Activated CD8-positive, alpha-beta T cell treated with anti-CD3 and anti-CD28 coated beads, Interleukin-2, amount 10 ng/mL, durations not matched to agents 7 days and 5 days (primary cell): ENCODE measurements at regions of chr1 and their contacts with region 1.

Region 1: GRCh38 chr1:66242646-66243547 is 291.1 kb upstream of the SGIP1 start:
- DNase-seq: peak; percentile 83
- ATAC-seq: peak; percentile 95
- H3K4me3 Mint-ChIP-seq: no peak overlapping the region
- H3K27ac Mint-ChIP-seq: no peak overlapping the region
- H3K4me1 Mint-ChIP-seq: peaks cover 27% of the 10 kb centered on the region
- H3K27me3 Mint-ChIP-seq: peaks cover 6% of the 10 kb centered on the region

Region 2: GRCh38 chr1:65717815-65718454 is 525.0 kb before region 1 on chr1:
- CTCF ChIA-PET with region 1: interaction called, 19 read pairs
- POLR2A ChIA-PET with region 1: no interaction called
- DNase-seq: peak; percentile 22
- ATAC-seq: no peak
- H3K4me3 Mint-ChIP-seq: no peak overlapping the region
- H3K27ac Mint-ChIP-seq: no peak overlapping the region
- H3K4me1 Mint-ChIP-seq: no peaks in the 10 kb centered on the region
- H3K27me3 Mint-ChIP-seq: peaks cover 24% of the 10 kb centered on the region

Region 3: DNA sequence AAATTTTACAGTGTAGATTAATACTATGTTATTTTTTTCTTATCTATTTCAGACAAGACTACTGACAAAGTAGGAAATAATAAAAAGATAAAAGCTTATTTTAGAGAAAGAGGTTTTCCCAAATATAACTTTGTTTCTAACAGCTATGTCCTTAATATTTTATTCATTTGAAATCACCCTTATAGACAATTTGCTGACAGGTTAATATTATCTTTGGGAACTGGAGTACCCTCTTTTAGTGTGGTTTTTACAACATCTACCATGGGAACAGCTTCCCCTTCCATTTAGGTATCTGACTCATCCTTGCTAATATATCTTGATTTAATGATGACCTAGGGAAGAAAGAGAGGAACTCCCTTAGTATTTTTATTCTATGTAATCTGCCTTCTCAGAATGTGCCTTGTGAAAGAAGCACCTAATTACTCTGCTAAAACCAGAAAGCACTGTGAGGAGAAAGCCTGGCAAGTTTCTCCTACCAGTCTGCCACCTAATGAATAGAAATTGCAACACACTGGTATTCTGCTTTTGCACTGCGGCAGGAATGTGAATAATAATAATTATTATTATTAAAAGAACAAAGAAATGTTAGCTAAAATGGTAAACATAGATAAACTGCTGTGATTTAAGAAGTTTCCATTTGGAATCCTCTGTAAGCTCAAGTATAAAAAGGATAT is 257.4 kb before region 1 on chr1:
- CTCF ChIA-PET with region 1: interaction called, 11 read pairs
- POLR2A ChIA-PET with region 1: no interaction called
- DNase-seq: no peak
- ATAC-seq: no peak
- H3K4me3 Mint-ChIP-seq: no peak overlapping the region
- H3K27ac Mint-ChIP-seq: no peak overlapping the region
- H3K4me1 Mint-ChIP-seq: no peaks in the 10 kb centered on the region
- H3K27me3 Mint-ChIP-seq: peaks cover 4% of the 10 kb centered on the region

Region 4: DNA sequence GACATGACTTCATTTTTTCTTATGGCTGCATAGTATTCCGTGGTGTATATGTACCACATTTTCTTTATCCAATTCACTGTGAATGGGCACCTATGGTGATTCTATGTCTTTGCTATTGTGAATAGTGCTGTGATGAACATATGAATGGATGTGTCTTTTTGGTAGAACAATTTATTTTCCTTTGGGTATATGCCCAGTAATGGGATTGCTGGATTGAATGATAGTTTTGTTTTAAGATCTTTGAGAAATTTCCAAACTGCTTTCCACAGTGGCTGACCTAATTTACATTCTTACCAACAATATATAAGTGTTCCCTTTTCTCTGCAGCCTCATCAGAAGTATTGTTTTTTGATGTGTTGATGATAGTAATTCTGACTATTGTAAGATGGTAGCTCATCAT is 70.6 kb before region 1 on chr1:
- CTCF ChIA-PET with region 1: interaction called, 10 read pairs
- POLR2A ChIA-PET with region 1: no interaction called
- DNase-seq: no peak
- ATAC-seq: no peak
- H3K4me3 Mint-ChIP-seq: no peak overlapping the region
- H3K27ac Mint-ChIP-seq: no peak overlapping the region
- H3K4me1 Mint-ChIP-seq: peaks cover 15% of the 10 kb centered on the region
- H3K27me3 Mint-ChIP-seq: peaks cover 16% of the 10 kb centered on the region

Region 5: GRCh38 chr1:66231217-66231616 is 11.7 kb before region 1 on chr1:
- CTCF ChIA-PET with region 1: interaction called, 20 read pairs
- POLR2A ChIA-PET with region 1: no interaction called
- DNase-seq: no peak
- ATAC-seq: no peak
- H3K4me3 Mint-ChIP-seq: no peak overlapping the region
- H3K27ac Mint-ChIP-seq: no peak overlapping the region
- H3K4me1 Mint-ChIP-seq: no peaks in the 10 kb centered on the region
- H3K27me3 Mint-ChIP-seq: peaks cover 14% of the 10 kb centered on the region

Region 6: DNA sequence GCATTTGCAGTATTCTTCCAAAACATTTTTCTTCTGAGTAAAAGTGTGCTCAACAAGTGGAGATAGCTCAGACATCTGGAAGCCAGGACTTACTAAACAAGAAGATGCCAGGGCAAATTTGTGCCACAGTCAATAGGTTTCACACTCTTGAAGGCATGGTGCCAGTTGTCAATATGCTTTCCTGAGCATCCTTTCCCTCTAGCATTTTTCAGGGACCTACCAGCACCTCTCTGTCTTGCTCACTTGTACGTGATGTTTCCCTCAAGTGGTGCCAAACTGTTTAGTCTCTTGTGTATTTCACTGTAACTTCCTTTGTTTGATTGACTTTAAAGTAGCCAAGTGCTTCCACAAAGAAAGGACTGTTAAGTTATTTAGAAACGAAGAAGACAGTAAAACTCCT is 97.0 kb after region 1 on chr1:
- CTCF ChIA-PET with region 1: interaction called, 23 read pairs
- POLR2A ChIA-PET with region 1: no interaction called
- DNase-seq: no peak
- ATAC-seq: no peak
- H3K4me3 Mint-ChIP-seq: peak overlapping the region; percentile 61
- H3K27ac Mint-ChIP-seq: peak overlapping the region; percentile 79
- H3K4me1 Mint-ChIP-seq: peaks cover 80% of the 10 kb centered on the region
- H3K27me3 Mint-ChIP-seq: no peaks in the 10 kb centered on the region

Region 7: DNA sequence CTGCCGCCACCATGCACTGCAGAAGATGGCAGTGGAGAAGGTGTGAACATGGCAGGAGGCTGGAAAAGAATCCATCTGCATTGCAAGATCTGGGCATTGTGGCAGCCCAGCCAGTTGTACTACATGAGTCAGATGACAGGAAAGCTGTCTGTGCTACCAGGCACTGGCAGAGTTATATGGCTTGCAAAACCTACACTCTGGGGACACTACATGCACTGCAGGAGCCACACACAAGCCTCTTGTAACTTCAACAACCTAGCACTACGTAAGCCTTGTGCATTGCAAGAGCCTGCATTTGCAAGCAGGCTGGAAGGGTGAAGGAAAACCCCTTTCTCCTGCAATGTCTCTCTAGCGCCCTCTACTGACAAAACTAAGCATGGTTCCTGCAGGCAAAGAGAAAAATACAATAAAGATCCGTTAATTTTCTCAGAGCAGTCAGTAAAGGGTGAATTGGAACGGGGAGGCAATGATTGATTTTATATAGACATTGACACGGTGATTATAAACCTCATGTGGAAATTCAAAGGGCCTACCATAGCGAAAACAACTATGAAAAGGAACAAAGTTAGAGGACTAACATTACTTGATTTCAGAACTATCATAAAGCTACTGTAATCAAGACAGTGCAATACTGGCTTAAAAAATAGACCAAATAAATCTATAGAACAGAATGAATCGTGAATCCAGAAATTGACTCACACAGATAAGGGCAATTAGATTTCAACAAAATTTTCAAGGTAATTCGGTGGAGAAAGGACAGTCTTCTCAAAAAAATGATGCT is 483.2 kb after region 1 on chr1:
- CTCF ChIA-PET with region 1: interaction called, 10 read pairs
- POLR2A ChIA-PET with region 1: no interaction called
- DNase-seq: peak; percentile 68
- ATAC-seq: peak; percentile 75
- H3K4me3 Mint-ChIP-seq: no peak overlapping the region
- H3K27ac Mint-ChIP-seq: no peak overlapping the region
- H3K4me1 Mint-ChIP-seq: peaks cover 14% of the 10 kb centered on the region
- H3K27me3 Mint-ChIP-seq: peaks cover 17% of the 10 kb centered on the region